Psoas muscle (tissue), 8 donors: ENCODE measurements at regions of chr4 and their contacts with region 1.

Region 1: GRCh38 chr4:118968005-118968404 is 79.4 kb downstream of the SYNPO2 start:
- DNase-seq: peak; percentile 41 to 70
- ATAC-seq: peak; percentile 85 to 88 (median 87)
- H3K4me3 ChIP-seq: peak overlapping the region; percentile 46
- H3K27ac ChIP-seq: peak overlapping the region; percentile 95
- H3K4me1 ChIP-seq: peaks cover 40% of the 10 kb centered on the region
- H3K27me3 ChIP-seq: no peaks in the 10 kb centered on the region
- CTCF ChIP-seq: no peak

Region 2: DNA sequence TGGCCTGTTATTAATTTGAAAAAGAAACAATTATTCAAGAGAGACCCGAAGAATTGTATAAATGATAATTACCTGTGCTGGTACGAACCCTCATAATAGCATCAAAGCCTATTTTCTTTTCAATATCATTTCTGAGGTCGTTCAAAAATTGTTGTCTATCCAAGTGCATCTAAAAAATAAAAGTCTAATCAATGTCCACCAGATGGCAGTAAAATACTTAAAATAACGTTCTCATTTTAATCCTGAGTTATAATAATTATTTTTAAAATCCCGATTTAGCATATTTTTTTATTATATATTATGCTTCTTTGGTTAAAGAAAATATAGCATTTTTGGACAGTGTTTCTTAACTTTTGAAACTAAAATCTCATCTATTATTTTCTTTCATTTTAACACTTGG is 227.1 kb before region 1 on chr4:
- intact Hi-C with region 1: loop called (anchors 5 kb)
- DNase-seq: no peak
- ATAC-seq: peak in 1 of 4 donors; percentile 68
- H3K4me3 ChIP-seq: peak overlapping the region; percentile 6
- H3K27ac ChIP-seq: peak overlapping the region; percentile 4
- H3K4me1 ChIP-seq: peaks cover 18% of the 10 kb centered on the region
- H3K27me3 ChIP-seq: no peaks in the 10 kb centered on the region
- CTCF ChIP-seq: peak; percentile 63

Region 3: DNA sequence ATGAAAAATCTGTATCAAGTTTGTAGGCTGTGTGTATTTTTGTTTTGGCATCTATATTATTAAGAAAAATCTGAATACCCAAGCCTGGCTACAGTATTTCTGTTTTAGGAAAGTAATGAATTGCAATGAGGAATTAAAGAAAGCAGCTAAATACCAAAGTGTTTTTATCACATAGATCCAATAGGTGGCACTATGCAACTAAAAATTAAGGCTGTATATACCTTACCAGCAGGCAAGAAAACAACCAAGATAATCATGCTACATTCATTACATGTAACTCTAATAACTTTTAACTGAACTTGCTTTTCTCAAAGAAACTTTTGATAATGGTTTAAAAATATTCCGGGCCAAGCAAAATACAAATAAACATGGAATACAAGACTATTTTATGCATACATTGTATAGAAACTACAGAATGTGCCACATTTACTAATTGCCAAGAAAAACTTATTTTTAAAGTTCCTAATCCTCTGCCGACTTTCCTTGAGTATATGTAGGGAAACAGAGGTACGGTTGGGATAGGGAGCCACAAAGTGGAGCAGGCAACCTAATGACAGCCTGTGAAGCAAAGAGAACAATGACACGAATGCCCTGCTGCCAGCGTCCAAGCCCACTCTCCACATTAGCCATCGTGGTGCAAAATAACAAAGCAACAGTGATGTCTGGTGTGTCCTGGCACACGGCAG is 195.8 kb before region 1 on chr4:
- intact Hi-C with region 1: loop called (anchors 2 to 5 kb)
- DNase-seq: no peak
- ATAC-seq: peak; percentile 79 to 92 (median 84)
- H3K4me3 ChIP-seq: peak overlapping the region; percentile 23
- H3K27ac ChIP-seq: peak overlapping the region; percentile 17
- H3K4me1 ChIP-seq: peaks cover 16% of the 10 kb centered on the region
- H3K27me3 ChIP-seq: no peaks in the 10 kb centered on the region
- CTCF ChIP-seq: peak; percentile 70

Region 4: GRCh38 chr4:118835571-118836300 is 132.3 kb before region 1 on chr4 and contains the start of gene SEC24D:
- intact Hi-C with region 1: loop called in 1 of 2 experiments (anchors 5 kb)
- DNase-seq: peak; percentile 92 to 95
- ATAC-seq: peak; percentile 96 to 98 (median 98)
- H3K4me3 ChIP-seq: peak within 1 kb of the TSS; percentile 100
- H3K27ac ChIP-seq: peak within 1 kb of the TSS; percentile 93
- H3K4me1 ChIP-seq: peaks cover 9% of the 10 kb centered on the region
- H3K27me3 ChIP-seq: no peaks in the 10 kb centered on the region
- CTCF ChIP-seq: no peak
- total RNA-seq, gene SEC24D: 5.8 to 13.7 (median 6.3) TPM

Region 5: GRCh38 chr4:118888666-118889311 is 79.2 kb before region 1 on chr4 and contains the start of gene SYNPO2:
- intact Hi-C with region 1: loop called (anchors 2 kb)
- DNase-seq: peak; percentile 79 to 87
- ATAC-seq: peak; percentile 74 to 81 (median 80)
- H3K4me3 ChIP-seq: peak within 1 kb of the TSS; percentile 75
- H3K27ac ChIP-seq: peak within 1 kb of the TSS; percentile 88
- H3K4me1 ChIP-seq: no peaks in the 10 kb centered on the region
- H3K27me3 ChIP-seq: no peaks in the 10 kb centered on the region
- CTCF ChIP-seq: no peak
- total RNA-seq, gene SYNPO2: 1,548 to 2,858 (median 2,312) TPM

Region 6: DNA sequence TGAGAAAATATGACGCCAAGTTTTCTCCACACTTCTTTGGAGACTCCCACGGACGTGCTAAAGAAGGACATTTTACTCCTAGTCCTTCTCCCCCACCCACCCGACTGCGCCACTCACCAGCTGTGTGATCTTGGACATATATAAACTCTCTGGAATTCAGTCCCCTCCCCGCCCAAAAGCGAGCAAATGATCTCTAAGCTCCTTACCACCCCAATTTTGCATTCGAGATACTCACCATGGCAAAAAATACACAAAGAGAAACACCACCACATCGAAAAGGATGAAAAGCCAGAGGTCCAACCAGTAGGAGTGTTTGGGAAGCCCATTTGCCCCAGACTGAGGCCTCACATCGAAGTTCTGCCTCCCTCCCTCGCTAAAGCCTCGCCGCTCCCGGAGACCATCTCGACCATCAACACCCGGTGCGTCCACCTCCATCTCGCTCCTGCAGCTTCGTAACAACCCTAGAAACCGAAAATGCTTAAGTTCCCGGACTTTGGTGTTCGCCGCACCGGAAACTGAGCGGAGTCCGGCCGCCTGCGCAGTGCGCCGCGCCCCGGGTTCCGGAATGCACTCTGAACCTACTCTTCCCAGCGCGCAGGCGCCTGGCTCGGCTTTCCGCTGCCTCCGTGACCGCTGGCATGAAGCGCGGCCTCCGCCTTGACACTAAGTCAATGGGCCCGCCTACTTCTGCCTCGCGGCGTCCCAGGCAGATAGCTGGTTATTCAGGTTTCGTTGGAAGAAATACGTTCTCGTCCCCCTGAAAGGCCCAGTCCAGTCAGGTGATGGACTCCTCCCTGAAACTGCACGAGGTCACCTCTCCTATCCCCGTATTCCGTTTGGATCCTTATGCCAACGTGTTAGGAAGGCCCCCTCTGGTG is 332.3 kb after region 1 on chr4:
- intact Hi-C with region 1: no loop called
- DNase-seq: peak; percentile 96
- ATAC-seq: peak; percentile 93 to 96 (median 96)
- H3K4me3 ChIP-seq: peak overlapping the region; percentile 69
- H3K27ac ChIP-seq: peak overlapping the region; percentile 84
- H3K4me1 ChIP-seq: peaks cover 26% of the 10 kb centered on the region
- H3K27me3 ChIP-seq: no peaks in the 10 kb centered on the region
- CTCF ChIP-seq: no peak